Activated CD4-positive, alpha-beta memory T cell treated with anti-CD3 and anti-CD28 coated beads, Interleukin-2, amount 10 ng/mL, durations not matched to agents 7 days and 5 days (primary cell): ENCODE measurements at regions of chr2 and their contacts with region 1.

Region 1: DNA sequence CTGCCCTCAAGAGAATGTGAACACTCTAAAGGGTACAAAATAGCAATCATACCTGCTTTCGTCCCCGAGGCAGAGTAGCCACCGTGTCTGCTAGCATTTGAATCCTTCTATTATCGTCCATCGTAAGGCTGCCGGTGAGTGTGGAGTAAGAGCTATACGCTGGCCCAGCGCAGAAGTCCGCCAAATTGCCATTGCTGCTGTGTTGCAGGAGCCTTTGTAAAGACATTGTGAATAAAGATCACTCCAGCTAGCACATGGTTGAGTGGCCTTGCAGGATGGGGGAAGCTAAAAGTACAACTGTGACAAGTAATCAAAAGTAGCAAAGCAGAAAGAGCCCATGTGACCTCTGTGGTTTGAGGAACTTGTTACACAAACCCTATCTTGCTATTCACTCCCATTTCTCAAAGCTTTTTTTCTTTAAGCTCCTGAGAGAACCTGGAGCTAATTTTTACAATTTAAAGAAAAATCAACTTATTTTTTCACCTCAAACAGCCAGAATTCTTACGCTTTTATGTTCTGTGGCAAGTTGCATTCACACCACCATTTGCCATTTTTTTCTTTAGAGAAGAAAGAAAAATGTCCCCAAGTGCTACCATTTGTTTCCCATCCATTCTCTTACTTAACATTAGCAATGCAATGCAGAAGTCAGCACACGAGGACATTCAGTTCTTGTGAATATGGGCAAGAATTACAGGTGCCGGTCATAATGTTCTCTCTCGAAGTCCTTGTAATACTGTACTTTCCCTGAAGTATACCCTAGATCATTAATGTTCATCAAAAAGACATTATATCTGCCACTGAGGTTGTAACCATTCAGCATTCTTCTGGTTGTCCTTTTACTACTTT is at the start of gene CYTIP:
- DNase-seq: peak; percentile 81
- H3K4me3 Mint-ChIP-seq: peak within 1 kb of the TSS; percentile 91
- H3K27ac Mint-ChIP-seq: peak within 1 kb of the TSS; percentile 96
- H3K4me1 Mint-ChIP-seq: peaks cover 40% of the 10 kb centered on the region
- H3K27me3 Mint-ChIP-seq: no peaks in the 10 kb centered on the region
- total RNA-seq, gene CYTIP: 389 to 406 TPM

Region 2: DNA sequence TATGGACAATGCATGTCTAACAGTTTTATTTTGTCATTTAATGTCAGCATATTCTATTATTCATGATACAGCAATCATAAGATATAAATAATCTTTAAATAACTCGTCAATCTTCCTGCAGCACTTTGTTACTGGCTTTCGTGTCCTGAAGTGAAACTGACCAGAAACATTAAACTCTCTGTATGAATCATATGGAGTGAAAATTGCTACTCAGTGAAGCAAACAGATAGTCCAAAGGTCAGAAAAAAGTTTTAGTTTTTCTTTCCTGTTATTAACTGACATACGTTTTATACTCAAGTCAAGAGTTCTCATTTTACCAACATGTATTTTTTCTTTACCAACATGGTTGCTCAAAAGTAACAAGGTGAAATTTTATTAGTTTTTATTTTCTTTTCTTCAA is 293.3 kb before region 1 on chr2:
- CTCF ChIA-PET with region 1: no interaction called
- POLR2A ChIA-PET with region 1: no interaction called
- DNase-seq: no peak
- H3K4me3 Mint-ChIP-seq: no peak overlapping the region
- H3K27ac Mint-ChIP-seq: no peak overlapping the region
- H3K4me1 Mint-ChIP-seq: peaks cover 4% of the 10 kb centered on the region
- H3K27me3 Mint-ChIP-seq: peaks cover 13% of the 10 kb centered on the region

Region 3: GRCh38 chr2:157261199-157261783 is 182.7 kb before region 1 on chr2:
- CTCF ChIA-PET with region 1: no interaction called
- POLR2A ChIA-PET with region 1: no interaction called
- DNase-seq: peak; percentile 28
- H3K4me3 Mint-ChIP-seq: no peak overlapping the region
- H3K27ac Mint-ChIP-seq: peak overlapping the region; percentile 0
- H3K4me1 Mint-ChIP-seq: peaks cover 33% of the 10 kb centered on the region
- H3K27me3 Mint-ChIP-seq: no peaks in the 10 kb centered on the region

Region 4: GRCh38 chr2:157336137-157337010 is 107.6 kb before region 1 on chr2:
- CTCF ChIA-PET with region 1: interaction called, 10 read pairs
- POLR2A ChIA-PET with region 1: interaction called, 28 read pairs
- DNase-seq: peak; percentile 36
- H3K4me3 Mint-ChIP-seq: no peak overlapping the region
- H3K27ac Mint-ChIP-seq: no peak overlapping the region
- H3K4me1 Mint-ChIP-seq: peaks cover 39% of the 10 kb centered on the region
- H3K27me3 Mint-ChIP-seq: no peaks in the 10 kb centered on the region

Region 5: DNA sequence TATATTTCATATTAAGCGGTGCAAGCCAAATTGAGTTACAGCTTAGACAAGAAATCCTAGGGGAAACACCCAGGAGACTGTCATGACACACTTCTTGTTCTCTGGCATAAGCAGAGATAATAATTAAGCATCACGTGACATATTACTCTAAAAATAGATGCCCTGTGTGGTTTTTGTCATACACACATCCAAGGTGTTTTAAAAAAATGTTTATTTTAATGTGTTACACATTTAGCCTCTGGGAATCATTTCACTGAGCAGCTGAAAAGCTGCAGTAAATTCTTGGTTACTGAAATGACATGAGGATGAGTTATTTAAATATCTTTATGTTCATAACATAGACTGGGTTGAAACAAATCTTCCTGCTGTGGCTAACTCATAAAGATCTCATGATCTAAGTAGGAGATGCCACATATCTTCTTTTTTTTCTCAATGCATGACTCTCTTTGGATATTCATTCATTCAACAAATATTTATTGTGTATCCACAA is 80.4 kb before region 1 on chr2:
- CTCF ChIA-PET with region 1: no interaction called
- POLR2A ChIA-PET with region 1: no interaction called
- DNase-seq: no peak
- H3K4me3 Mint-ChIP-seq: no peak overlapping the region
- H3K27ac Mint-ChIP-seq: no peak overlapping the region
- H3K4me1 Mint-ChIP-seq: peaks cover 12% of the 10 kb centered on the region
- H3K27me3 Mint-ChIP-seq: no peaks in the 10 kb centered on the region

Region 6: DNA sequence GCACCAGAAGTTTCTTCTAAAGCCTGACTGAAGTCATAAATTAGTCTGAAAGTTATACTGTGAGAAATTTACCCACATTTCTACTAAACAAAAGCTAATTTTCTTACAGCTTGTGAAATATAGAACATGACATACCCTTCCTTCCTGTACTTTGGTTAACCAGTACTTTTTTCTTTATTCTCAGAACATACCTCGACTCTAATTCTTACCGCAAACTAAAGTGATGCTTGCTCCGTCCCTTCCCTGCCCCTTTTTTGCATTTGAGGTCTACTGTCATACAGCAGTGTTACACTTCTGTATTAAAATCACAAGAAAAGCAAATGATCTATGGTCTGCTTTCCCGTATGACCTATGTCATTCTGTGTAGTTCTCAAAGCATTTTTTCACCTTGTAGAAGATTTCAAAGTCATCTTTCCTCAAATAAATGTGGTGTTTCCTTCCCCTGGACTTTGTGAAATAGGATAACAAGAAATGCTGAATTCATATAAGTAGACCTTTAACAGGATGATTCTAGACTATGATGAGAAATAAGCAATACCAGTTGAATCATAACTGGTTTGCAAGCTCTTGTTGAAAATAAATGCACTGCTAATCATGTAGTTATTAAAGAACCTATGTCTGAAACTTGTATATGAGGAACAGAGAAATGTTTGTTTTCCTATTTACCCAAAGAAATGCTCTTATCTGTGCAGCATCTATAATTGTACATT is 30.5 kb before region 1 on chr2:
- CTCF ChIA-PET with region 1: interaction called, 50 read pairs
- POLR2A ChIA-PET with region 1: interaction called, 797 read pairs
- DNase-seq: peak; percentile 69
- H3K4me3 Mint-ChIP-seq: peak overlapping the region; percentile 63
- H3K27ac Mint-ChIP-seq: peak overlapping the region; percentile 89
- H3K4me1 Mint-ChIP-seq: peaks cover 79% of the 10 kb centered on the region
- H3K27me3 Mint-ChIP-seq: no peaks in the 10 kb centered on the region

Region 7: GRCh38 chr2:157433394-157433793 is 10.6 kb before region 1 on chr2:
- CTCF ChIA-PET with region 1: interaction called, 6 read pairs
- POLR2A ChIA-PET with region 1: interaction called, 797 read pairs
- DNase-seq: no peak
- H3K4me3 Mint-ChIP-seq: peak overlapping the region; percentile 91
- H3K27ac Mint-ChIP-seq: peak overlapping the region; percentile 80
- H3K4me1 Mint-ChIP-seq: peaks cover 78% of the 10 kb centered on the region
- H3K27me3 Mint-ChIP-seq: no peaks in the 10 kb centered on the region

Region 8: GRCh38 chr2:157468931-157469708 is 25.1 kb after region 1 on chr2:
- CTCF ChIA-PET with region 1: interaction called, 11 read pairs
- POLR2A ChIA-PET with region 1: interaction called, 338 read pairs
- DNase-seq: no peak
- H3K4me3 Mint-ChIP-seq: peak overlapping the region; percentile 72
- H3K27ac Mint-ChIP-seq: peak overlapping the region; percentile 99
- H3K4me1 Mint-ChIP-seq: peaks cover 92% of the 10 kb centered on the region
- H3K27me3 Mint-ChIP-seq: no peaks in the 10 kb centered on the region

Region 9: DNA sequence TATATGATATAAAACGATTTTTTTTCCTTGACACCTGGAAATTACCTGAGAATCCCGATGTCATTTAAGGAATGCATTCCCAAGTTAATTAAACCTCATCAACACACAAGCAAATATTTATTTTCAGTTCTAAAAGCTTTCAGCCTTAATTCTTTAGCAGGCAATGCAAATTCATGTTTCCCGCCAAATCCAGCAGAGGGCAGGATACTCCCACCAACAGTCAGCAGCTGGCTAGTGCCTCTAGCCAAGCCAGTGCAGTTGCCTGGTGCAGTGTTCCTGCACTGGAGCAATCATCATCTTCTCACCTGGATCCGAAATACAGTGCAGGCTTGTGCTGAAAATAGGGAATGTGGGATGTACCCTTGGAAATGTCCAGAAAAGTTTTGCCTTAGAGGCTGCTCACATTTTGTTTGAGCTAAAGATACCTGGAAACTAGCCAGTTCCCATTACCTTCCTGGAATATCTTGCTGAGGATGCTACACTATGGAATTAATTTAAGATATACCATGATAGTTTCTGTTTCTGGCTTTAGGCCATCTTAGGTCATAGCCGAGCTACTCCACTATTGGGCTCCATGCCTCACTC is 48.3 kb after region 1 on chr2:
- CTCF ChIA-PET with region 1: interaction called, 13 read pairs
- POLR2A ChIA-PET with region 1: interaction called, 43 read pairs
- DNase-seq: peak; percentile 79
- H3K4me3 Mint-ChIP-seq: no peak overlapping the region
- H3K27ac Mint-ChIP-seq: no peak overlapping the region
- H3K4me1 Mint-ChIP-seq: peaks cover 66% of the 10 kb centered on the region
- H3K27me3 Mint-ChIP-seq: no peaks in the 10 kb centered on the region

Region 10: DNA sequence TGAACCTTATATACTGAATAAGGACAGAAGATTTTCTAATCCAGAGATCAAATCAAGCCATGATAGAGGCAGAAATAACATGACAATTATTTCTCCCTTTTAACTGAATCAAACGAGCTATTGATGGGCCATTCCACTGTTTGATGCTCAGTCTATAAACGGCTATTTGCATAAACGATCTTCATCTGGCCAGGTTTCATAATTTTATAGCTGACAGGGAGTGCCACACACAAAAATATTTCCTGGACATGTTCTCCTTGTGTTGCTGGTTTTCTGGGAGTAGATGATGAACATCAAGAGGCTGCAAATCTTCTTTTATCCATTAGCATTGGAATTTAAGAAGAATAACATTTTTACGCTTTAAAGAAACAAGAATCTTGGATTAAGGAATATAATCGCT is 121.5 kb after region 1 on chr2:
- CTCF ChIA-PET with region 1: no interaction called
- POLR2A ChIA-PET with region 1: no interaction called
- DNase-seq: no peak
- H3K4me3 Mint-ChIP-seq: no peak overlapping the region
- H3K27ac Mint-ChIP-seq: no peak overlapping the region
- H3K4me1 Mint-ChIP-seq: no peaks in the 10 kb centered on the region
- H3K27me3 Mint-ChIP-seq: no peaks in the 10 kb centered on the region